ENCODE measurements at regions of chr2 and their contacts with region 1.

Region 1: DNA sequence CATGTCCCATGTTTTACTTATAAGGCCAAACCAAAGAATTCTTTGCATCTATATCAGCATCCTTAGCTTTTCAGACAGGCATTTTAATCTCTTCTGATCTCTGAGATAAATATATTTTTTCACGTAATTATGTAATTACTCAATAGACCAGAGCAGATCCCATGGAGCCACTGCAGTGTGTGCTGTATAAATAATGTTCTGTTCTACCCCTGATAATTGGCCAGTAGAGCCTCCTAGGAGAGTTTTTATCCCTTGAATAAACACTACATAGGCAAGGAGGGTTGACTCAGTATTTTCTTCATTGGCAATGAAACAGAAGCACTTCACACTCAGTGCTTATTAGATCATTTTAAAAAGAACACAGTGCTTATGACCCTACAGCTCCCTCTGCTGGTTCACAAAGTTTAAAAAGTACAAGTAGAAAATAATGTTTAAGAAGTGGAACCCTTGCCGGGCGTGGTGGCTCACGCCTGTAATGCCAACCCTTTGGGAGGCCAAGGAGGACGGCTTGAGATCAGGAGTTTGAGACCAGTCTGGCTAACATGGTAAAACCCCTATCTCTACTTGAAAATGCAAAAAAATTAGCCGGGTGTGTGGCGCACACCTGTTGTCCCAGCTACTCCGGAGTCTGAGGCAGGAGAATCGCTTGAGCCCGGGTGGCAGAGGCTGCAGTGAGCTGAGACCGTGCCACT is 91.9 kb downstream of the PPP1R1C start:
- DNase-seq: peak; percentile 28 to 91
- H3K4me3 ChIP-seq: no peak overlapping the region
- H3K27ac ChIP-seq: peak overlapping the region in 2 of 5 donors; percentile 15 to 27
- H3K4me1 ChIP-seq: peaks cover 0 to 19% (median 6%) of the 10 kb centered on the region in 4 donors
- H3K27me3 ChIP-seq: no peaks in the 10 kb centered on the region
- CTCF ChIP-seq: peak in 4 of 7 experiments; percentile 35 to 65 (median 63)
- EP300 ChIP-seq: no peak
- POLR2A ChIP-seq: no peak

Region 2: GRCh38 chr2:181742922-181743722 is 334.5 kb before region 1 on chr2:
- intact Hi-C with region 1: loop called (anchors 10 kb)
- DNase-seq: peak; percentile 48 to 85
- H3K4me3 ChIP-seq: no peak overlapping the region
- H3K27ac ChIP-seq: no peak overlapping the region
- H3K4me1 ChIP-seq: peaks cover 0 to 17% (median 0%) of the 10 kb centered on the region in 4 donors
- H3K27me3 ChIP-seq: no peaks in the 10 kb centered on the region
- CTCF ChIP-seq: peak in 5 of 7 experiments; percentile 39 to 78 (median 65)
- EP300 ChIP-seq: no peak
- POLR2A ChIP-seq: no peak

Measured in stomach (tissue), 19 donors.